Spleen (tissue), 13 donors: ENCODE measurements at regions of chr11 and their contacts with region 1.

Region 1: DNA sequence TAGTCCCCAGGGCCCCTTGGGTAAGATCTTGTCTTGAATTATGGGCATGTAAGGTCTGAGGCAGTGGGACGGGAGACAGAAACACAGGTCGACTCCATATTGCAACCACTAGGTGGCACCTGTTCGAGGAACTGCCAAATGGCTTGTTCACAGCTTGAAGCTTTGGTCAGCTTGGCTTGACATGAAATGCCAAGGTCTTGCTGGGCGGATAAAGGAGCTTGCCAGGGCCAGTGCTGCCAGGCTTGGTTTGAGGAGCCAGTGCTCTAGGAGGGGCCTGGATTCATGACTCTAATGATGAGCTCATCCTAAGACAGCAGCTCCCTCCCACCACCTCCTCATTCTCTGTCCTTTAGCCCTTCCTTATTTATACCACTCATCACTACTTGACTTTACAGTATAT is 11.9 kb upstream of the NRIP3 start:
- DNase-seq: peak; percentile 77
- H3K4me3 ChIP-seq: no peak overlapping the region
- H3K27ac ChIP-seq: no peak overlapping the region
- H3K4me1 ChIP-seq: peaks cover 0 to 26% (median 21%) of the 10 kb centered on the region in 6 donors
- H3K27me3 ChIP-seq: no peaks in the 10 kb centered on the region
- CTCF ChIP-seq: peak; percentile 52 to 86 (median 78)
- POLR2A ChIP-seq: no peak

Region 2: DNA sequence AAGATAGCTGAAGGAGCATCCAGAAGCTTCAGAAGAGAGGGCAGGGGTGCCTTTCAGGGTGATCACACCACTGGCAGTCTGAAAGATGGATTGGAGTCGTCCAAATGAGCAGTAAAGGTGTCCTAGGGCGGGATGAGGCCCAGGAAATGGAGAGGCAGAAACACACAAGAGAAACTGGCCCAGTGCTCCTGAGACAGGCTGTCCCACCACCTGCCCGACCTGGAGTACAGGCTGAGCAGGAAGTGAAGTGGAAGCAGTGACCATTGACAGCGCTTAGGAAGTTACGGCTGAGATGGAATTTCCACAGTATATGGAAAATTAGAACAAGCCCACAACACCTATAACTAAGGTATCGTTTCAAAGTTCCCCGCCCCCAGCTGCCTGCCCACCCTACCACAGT is 1012.5 kb before region 1 on chr11:
- intact Hi-C with region 1: no loop called
- DNase-seq: no peak
- H3K4me3 ChIP-seq: no peak overlapping the region
- H3K27ac ChIP-seq: no peak overlapping the region
- H3K4me1 ChIP-seq: no peaks in the 10 kb centered on the region
- H3K27me3 ChIP-seq: peaks cover 0 to 7% (median 0%) of the 10 kb centered on the region in 7 donors
- CTCF ChIP-seq: no peak
- POLR2A ChIP-seq: no peak

Region 3: GRCh38 chr11:8699903-8700302 is 315.8 kb before region 1 on chr11:
- intact Hi-C with region 1: no loop called
- DNase-seq: no peak
- H3K4me3 ChIP-seq: no peak overlapping the region
- H3K27ac ChIP-seq: peak overlapping the region in 7 of 8 donors; percentile 45 to 69 (median 61)
- H3K4me1 ChIP-seq: peaks cover 9 to 53% (median 18%) of the 10 kb centered on the region in 6 donors
- H3K27me3 ChIP-seq: no peaks in the 10 kb centered on the region
- CTCF ChIP-seq: no peak
- POLR2A ChIP-seq: no peak

Region 4: DNA sequence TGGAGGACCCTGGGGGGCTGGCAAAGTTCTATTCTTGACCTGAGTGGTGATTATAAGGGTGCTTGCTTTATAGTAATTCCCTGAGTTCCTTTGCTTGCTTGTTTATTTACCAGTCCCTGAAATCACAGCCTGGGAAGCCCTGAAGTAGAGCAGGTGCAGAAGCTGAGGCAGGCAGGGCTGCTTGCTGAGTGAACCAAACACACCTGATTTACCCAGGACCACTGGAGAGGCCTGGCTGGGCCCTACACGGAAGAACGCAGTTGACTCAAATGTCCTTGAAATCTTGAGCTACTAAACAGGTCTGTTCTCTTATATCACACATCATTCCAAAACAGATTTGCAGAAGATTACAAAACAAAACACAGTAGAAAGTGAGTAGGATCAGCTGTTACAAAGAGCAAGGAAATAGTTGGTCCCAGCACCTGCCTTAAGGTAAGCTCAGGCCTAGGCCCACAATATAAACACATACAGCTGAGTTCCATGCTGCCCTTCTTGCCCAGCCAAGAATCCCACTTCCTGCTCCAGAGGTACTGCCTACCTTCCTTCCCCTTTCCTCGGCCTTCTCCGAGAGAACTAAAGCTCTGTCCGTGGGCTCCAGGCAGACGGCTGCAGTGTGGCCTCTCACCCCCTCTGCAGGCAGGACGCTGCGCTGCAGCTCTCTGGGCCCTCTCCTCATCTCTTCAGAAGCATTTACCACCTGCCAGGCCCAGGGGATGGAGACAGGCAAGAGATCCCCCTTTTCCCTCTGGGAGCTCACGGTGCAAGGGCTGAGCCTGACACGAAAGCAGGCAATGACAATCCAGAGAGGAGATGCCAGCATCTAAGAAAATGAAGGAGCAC is 121.8 kb after region 1 on chr11:
- intact Hi-C with region 1: loop called (anchors 5 kb)
- DNase-seq: peak; percentile 88
- H3K4me3 ChIP-seq: no peak overlapping the region
- H3K27ac ChIP-seq: peak overlapping the region in 3 of 8 donors; percentile 19 to 38 (median 35)
- H3K4me1 ChIP-seq: peaks cover 3 to 36% (median 20%) of the 10 kb centered on the region in 6 donors
- H3K27me3 ChIP-seq: no peaks in the 10 kb centered on the region
- CTCF ChIP-seq: peak; percentile 69 to 97 (median 87)
- POLR2A ChIP-seq: no peak

Region 5: GRCh38 chr11:9506489-9507276 is 491.0 kb after region 1 on chr11:
- intact Hi-C with region 1: loop called (anchors 5 kb)
- DNase-seq: peak; percentile 82
- H3K4me3 ChIP-seq: no peak overlapping the region
- H3K27ac ChIP-seq: no peak overlapping the region
- H3K4me1 ChIP-seq: peaks cover 0 to 18% (median 6%) of the 10 kb centered on the region in 6 donors
- H3K27me3 ChIP-seq: no peaks in the 10 kb centered on the region
- CTCF ChIP-seq: peak; percentile 64 to 92 (median 84)
- POLR2A ChIP-seq: no peak